ENCODE measurements at regions of chr11 and their contacts with region 1.

Region 1: DNA sequence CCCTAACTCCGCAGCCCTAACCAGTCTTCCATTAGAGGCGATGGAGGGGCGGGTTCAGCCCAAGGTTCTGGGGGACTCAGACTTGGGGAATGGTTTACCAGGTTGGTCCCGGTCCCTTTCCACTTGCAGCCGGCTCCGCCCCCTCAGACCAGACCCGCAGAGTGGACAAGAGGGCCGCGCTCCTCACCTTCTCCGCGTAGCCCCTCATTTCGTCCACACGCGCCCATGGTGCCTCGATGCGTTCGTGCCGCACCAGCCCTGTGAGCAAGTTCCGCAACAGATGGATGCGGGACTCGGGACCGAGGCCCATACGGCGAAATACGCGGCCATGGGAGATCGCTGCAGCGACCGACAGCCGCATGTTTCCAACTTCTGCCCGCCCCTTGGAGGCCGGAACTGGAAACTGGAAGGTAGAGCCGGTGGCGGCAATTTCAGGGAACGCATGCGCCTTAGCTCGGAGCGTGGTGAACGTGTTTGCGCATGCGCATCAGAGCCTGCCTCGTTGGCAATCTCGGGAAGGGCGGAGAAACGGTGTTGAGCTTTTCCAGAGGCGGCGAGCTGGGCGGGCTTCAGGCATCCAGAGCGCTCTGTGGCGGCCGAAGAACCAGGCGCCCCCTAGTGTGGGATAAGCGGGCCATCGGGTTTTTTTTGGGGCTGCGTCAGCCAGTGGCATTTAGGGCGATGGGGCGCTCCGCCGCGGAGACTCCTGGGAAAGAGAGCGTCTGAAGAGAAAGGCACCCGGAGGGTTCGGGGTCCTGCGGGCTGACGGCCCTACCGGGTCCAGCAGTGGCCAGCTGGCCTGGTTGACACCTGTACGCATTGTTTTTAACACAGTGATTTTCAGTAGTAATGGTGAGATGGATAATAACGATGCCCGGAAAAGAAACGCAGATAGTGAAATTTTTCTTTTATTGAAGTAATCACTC is at the start of gene MRPL17:
- DNase-seq: peak; percentile 95 to 100 (median 99)
- ATAC-seq: peak; percentile 99
- H3K4me3 ChIP-seq: peak within 1 kb of the TSS; percentile 75
- H3K4me3 Mint-ChIP-seq: peak within 1 kb of the TSS; percentile 83 to 99 (median 98)
- H3K27ac ChIP-seq: peak within 1 kb of the TSS; percentile 85
- H3K27ac Mint-ChIP-seq: peak within 1 kb of the TSS; percentile 94 to 99 (median 99)
- H3K4me1 ChIP-seq: peaks cover 7 to 10% of the 10 kb centered on the region in 2 donors
- H3K4me1 Mint-ChIP-seq: peaks cover 18 to 58% (median 44%) of the 10 kb centered on the region in 7 donors
- H3K27me3 ChIP-seq: no peaks in the 10 kb centered on the region
- H3K27me3 Mint-ChIP-seq: peaks cover 0 to 3% (median 0%) of the 10 kb centered on the region in 5 donors
- total RNA-seq, gene MRPL17: 10.0 to 70.3 (median 26.4) TPM

Region 2: DNA sequence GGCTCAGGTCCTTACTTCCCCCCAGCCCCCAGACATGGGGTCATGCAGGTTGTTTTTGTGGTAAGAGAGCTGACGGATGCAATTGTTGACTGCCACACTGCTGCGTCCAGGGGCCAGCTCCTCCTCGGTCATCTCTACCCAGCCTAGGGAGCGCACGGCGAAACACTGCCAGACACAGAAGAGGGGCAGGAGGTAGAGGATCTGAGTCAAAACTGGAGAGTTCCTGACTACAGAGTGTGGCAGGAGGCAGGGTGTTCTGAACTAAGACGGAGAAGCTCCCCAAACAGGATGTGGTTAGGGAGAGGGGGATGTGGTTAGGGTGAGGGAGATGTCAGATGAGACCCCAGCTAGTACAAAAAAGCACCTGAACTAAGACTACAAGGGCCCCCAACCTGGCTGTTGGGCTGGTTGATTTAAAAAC is 280.6 kb before region 1 on chr11:
- CTCF ChIA-PET with region 1: no interaction called
- POLR2A ChIA-PET with region 1: interaction called, 3 read pairs
- intact Hi-C with region 1: loop called in 1 of 2 experiments (anchors 5 kb)
- DNase-seq: peak in 8 of 9 donors; percentile 69 to 99 (median 97)
- ATAC-seq: peak; percentile 92
- H3K4me3 ChIP-seq: peak overlapping the region; percentile 52
- H3K4me3 Mint-ChIP-seq: peak overlapping the region; percentile 74 to 94 (median 90)
- H3K27ac ChIP-seq: peak overlapping the region; percentile 80
- H3K27ac Mint-ChIP-seq: peak overlapping the region; percentile 94 to 100 (median 97)
- H3K4me1 ChIP-seq: peaks cover 53 to 83% of the 10 kb centered on the region in 2 donors
- H3K4me1 Mint-ChIP-seq: peaks cover 63 to 100% (median 87%) of the 10 kb centered on the region in 7 donors
- H3K27me3 ChIP-seq: no peaks in the 10 kb centered on the region
- H3K27me3 Mint-ChIP-seq: peaks cover 0 to 5% (median 0%) of the 10 kb centered on the region in 5 donors

Region 3: GRCh38 chr11:6531267-6531752 is 151.9 kb before region 1 on chr11:
- CTCF ChIA-PET with region 1: interaction called, 30 read pairs
- POLR2A ChIA-PET with region 1: interaction called, 4 read pairs
- intact Hi-C with region 1: loop called (anchors 1 kb)
- DNase-seq: peak in 7 of 9 donors; percentile 7 to 51 (median 39)
- ATAC-seq: peak; percentile 83
- H3K4me3 ChIP-seq: no peak overlapping the region
- H3K4me3 Mint-ChIP-seq: no peak overlapping the region
- H3K27ac ChIP-seq: no peak overlapping the region
- H3K27ac Mint-ChIP-seq: no peak overlapping the region
- H3K4me1 ChIP-seq: peaks cover 4 to 5% of the 10 kb centered on the region in 2 donors
- H3K4me1 Mint-ChIP-seq: peaks cover 5 to 14% (median 11%) of the 10 kb centered on the region in 7 donors
- H3K27me3 ChIP-seq: no peaks in the 10 kb centered on the region
- H3K27me3 Mint-ChIP-seq: no peaks in the 10 kb centered on the region

Region 4: DNA sequence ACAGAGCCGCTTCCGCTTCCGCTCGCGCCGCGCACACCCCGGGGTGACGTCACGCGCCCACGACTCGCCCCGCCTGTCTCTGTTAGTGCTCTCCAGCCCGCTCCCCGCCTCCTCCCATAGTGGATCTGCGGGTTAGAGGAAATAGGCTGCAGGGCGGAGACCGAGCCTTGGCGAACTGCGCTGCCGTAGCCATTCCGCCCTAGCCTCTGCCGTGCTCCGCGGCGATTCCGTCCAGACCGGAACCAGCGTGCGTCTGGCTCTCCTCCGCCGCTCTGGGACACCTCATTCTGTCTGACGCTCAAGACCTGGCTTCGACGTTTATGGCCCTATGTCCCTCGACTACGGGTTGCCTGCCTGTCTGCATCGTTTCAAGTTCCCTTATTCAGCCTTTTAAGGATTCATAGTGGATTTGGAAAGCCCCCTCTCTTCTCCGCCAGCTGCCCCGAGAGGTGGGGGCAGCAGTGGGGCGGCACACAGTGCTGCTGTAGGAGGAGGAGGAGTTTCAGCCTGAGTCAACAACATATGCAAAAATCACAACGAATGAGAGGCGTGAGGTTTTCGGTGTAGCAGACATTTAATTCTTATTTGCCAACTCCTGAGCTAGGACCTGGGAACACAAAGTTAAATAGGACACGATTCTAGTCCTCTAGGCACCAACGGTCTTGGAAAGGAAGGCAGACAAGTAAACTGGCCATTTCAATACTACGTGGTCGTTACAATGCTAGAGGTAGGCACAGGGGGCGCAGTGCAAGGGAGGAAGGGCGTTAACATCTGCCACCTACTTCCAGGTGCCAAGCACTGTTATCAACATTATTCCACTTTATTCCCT is 70.8 kb before region 1 on chr11 and contains the start of gene TAF10:
- CTCF ChIA-PET with region 1: interaction called, 23 read pairs
- POLR2A ChIA-PET with region 1: interaction called, 170 read pairs
- intact Hi-C with region 1: loop called (anchors 1 kb)
- DNase-seq: peak; percentile 89 to 97 (median 95)
- ATAC-seq: peak; percentile 94
- H3K4me3 ChIP-seq: peak within 1 kb of the TSS; percentile 83
- H3K4me3 Mint-ChIP-seq: peak within 1 kb of the TSS in 6 of 10 donors; percentile 84 to 94 (median 92)
- H3K27ac ChIP-seq: peak within 1 kb of the TSS; percentile 91
- H3K27ac Mint-ChIP-seq: peak within 1 kb of the TSS in 5 of 9 donors; percentile 90 to 98 (median 96)
- H3K4me1 ChIP-seq: peaks cover 25% of the 10 kb centered on the region in 2 donors
- H3K4me1 Mint-ChIP-seq: peaks cover 9 to 46% (median 33%) of the 10 kb centered on the region in 7 donors
- H3K27me3 ChIP-seq: no peaks in the 10 kb centered on the region
- H3K27me3 Mint-ChIP-seq: no peaks in the 10 kb centered on the region
- total RNA-seq, gene TAF10: 116 to 135 (median 128) TPM

Region 5: DNA sequence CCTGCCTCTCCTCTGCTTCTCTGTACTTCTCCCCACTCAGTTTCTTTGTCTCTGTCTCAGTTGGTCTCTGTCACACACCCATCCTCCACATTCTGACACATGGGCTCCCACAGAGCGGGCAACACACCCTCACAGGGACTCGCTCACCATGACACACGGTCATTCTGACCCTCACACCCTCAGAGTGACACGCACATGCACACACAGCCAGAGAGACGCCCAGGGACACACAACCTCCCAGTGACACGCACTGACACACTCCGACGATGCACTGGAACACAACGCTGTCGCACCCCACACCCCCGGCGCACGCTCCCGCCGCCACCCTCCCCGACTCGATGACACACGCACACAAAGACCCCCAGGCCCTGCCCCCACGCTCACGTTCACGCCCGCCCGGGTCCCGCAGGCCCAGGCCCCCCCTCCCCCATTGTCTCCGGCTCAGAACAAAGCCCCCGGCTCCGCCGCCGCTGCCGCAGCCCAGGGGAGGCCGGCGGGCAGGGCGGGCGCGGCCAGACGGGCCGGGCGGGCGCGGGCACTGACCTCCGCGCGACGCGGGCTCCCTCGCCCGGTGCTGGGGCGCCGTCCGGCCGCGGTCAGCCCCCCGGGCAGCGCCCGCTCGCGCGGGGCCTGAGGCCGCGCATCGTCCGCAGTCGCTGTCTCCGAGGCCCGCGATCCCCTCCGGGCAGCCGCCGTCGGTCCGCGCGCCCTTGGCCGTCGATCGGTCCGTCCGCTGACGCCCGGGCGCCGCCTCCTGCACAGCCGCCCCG is 28.0 kb before region 1 on chr11:
- CTCF ChIA-PET with region 1: no interaction called
- POLR2A ChIA-PET with region 1: interaction called, 8 read pairs
- intact Hi-C with region 1: loop called in 1 of 2 experiments (anchors 2 kb)
- DNase-seq: peak in 7 of 9 donors; percentile 15 to 50 (median 34)
- ATAC-seq: peak; percentile 60
- H3K4me3 ChIP-seq: peak overlapping the region; percentile 52
- H3K4me3 Mint-ChIP-seq: no peak overlapping the region
- H3K27ac ChIP-seq: peak overlapping the region; percentile 66
- H3K27ac Mint-ChIP-seq: no peak overlapping the region
- H3K4me1 ChIP-seq: peaks cover 0 to 26% of the 10 kb centered on the region in 2 donors
- H3K4me1 Mint-ChIP-seq: peaks cover 5 to 11% (median 7%) of the 10 kb centered on the region in 7 donors
- H3K27me3 ChIP-seq: no peaks in the 10 kb centered on the region
- H3K27me3 Mint-ChIP-seq: peaks cover 0 to 16% (median 0%) of the 10 kb centered on the region in 5 donors

Region 6: GRCh38 chr11:6746086-6746618 is 63.0 kb after region 1 on chr11:
- CTCF ChIA-PET with region 1: interaction called, 7 read pairs
- POLR2A ChIA-PET with region 1: interaction called, 13 read pairs
- intact Hi-C with region 1: loop called in 1 of 2 experiments (anchors 1 kb)
- DNase-seq: peak in 8 of 9 donors; percentile 32 to 66 (median 64)
- ATAC-seq: peak; percentile 89
- H3K4me3 ChIP-seq: peak overlapping the region; percentile 80
- H3K4me3 Mint-ChIP-seq: no peak overlapping the region
- H3K27ac ChIP-seq: peak overlapping the region; percentile 85
- H3K27ac Mint-ChIP-seq: no peak overlapping the region
- H3K4me1 ChIP-seq: peaks cover 18 to 37% of the 10 kb centered on the region in 2 donors
- H3K4me1 Mint-ChIP-seq: peaks cover 26 to 48% (median 29%) of the 10 kb centered on the region in 7 donors
- H3K27me3 ChIP-seq: no peaks in the 10 kb centered on the region
- H3K27me3 Mint-ChIP-seq: no peaks in the 10 kb centered on the region

Region 7: GRCh38 chr11:6871278-6871677 is 188.1 kb after region 1 on chr11:
- CTCF ChIA-PET with region 1: no interaction called
- POLR2A ChIA-PET with region 1: no interaction called
- intact Hi-C with region 1: no loop called
- DNase-seq: no peak
- ATAC-seq: no peak
- H3K4me3 ChIP-seq: no peak overlapping the region
- H3K4me3 Mint-ChIP-seq: no peak overlapping the region
- H3K27ac ChIP-seq: no peak overlapping the region
- H3K27ac Mint-ChIP-seq: no peak overlapping the region
- H3K4me1 ChIP-seq: no peaks in the 10 kb centered on the region
- H3K4me1 Mint-ChIP-seq: no peaks in the 10 kb centered on the region
- H3K27me3 ChIP-seq: peaks cover 0 to 7% of the 10 kb centered on the region in 2 donors
- H3K27me3 Mint-ChIP-seq: peaks cover 6 to 29% (median 12%) of the 10 kb centered on the region in 5 donors

Region 8: GRCh38 chr11:6882747-6883146 is 199.5 kb after region 1 on chr11:
- CTCF ChIA-PET with region 1: no interaction called
- POLR2A ChIA-PET with region 1: no interaction called
- intact Hi-C with region 1: no loop called
- DNase-seq: no peak
- ATAC-seq: no peak
- H3K4me3 ChIP-seq: no peak overlapping the region
- H3K4me3 Mint-ChIP-seq: no peak overlapping the region
- H3K27ac ChIP-seq: no peak overlapping the region
- H3K27ac Mint-ChIP-seq: no peak overlapping the region
- H3K4me1 ChIP-seq: no peaks in the 10 kb centered on the region
- H3K4me1 Mint-ChIP-seq: no peaks in the 10 kb centered on the region
- H3K27me3 ChIP-seq: no peaks in the 10 kb centered on the region
- H3K27me3 Mint-ChIP-seq: peaks cover 10 to 37% (median 29%) of the 10 kb centered on the region in 5 donors

Region 9: GRCh38 chr11:7936615-7937014 is 1253.4 kb after region 1 on chr11:
- CTCF ChIA-PET with region 1: no interaction called
- POLR2A ChIA-PET with region 1: no interaction called
- intact Hi-C with region 1: no loop called
- DNase-seq: no peak
- ATAC-seq: no peak
- H3K4me3 ChIP-seq: no peak overlapping the region
- H3K4me3 Mint-ChIP-seq: no peak overlapping the region
- H3K27ac ChIP-seq: no peak overlapping the region
- H3K27ac Mint-ChIP-seq: no peak overlapping the region
- H3K4me1 ChIP-seq: no peaks in the 10 kb centered on the region
- H3K4me1 Mint-ChIP-seq: no peaks in the 10 kb centered on the region
- H3K27me3 ChIP-seq: no peaks in the 10 kb centered on the region
- H3K27me3 Mint-ChIP-seq: peaks cover 8 to 57% (median 27%) of the 10 kb centered on the region in 5 donors

Measured in naive thymus-derived CD4-positive, alpha-beta T cell (primary cell).